Dendritic cell treated with granulocyte-macrophage colony-stimulating factor and Interleukin-4, amounts not matched to agents 40 ng/mL and 50 ng/mL, for 4 days (primary cell): ENCODE measurements at regions of chr11 and their contacts with region 1.

Region 1: GRCh38 chr11:117180661-117181585 is 2.4 kb downstream of the SIDT2 start:
- H3K4me3 Mint-ChIP-seq: peak overlapping the region; percentile 96
- H3K27ac Mint-ChIP-seq: peak overlapping the region; percentile 94
- H3K4me1 Mint-ChIP-seq: peaks cover 50% of the 10 kb centered on the region
- H3K27me3 Mint-ChIP-seq: no peaks in the 10 kb centered on the region

Region 2: GRCh38 chr11:117098269-117099232 is 82.4 kb before region 1 on chr11 and contains the start of gene SIK3:
- intact Hi-C with region 1: no loop called
- H3K4me3 Mint-ChIP-seq: peak within 1 kb of the TSS; percentile 91
- H3K27ac Mint-ChIP-seq: peak within 1 kb of the TSS; percentile 100
- H3K4me1 Mint-ChIP-seq: peaks cover 41% of the 10 kb centered on the region
- H3K27me3 Mint-ChIP-seq: no peaks in the 10 kb centered on the region

Region 3: GRCh38 chr11:117144477-117145392 is 36.2 kb before region 1 on chr11:
- intact Hi-C with region 1: loop called (anchors 5 kb)
- H3K4me3 Mint-ChIP-seq: peak overlapping the region; percentile 99
- H3K27ac Mint-ChIP-seq: peak overlapping the region; percentile 100
- H3K4me1 Mint-ChIP-seq: peaks cover 58% of the 10 kb centered on the region
- H3K27me3 Mint-ChIP-seq: peaks cover 4% of the 10 kb centered on the region

Region 4: GRCh38 chr11:117226388-117227385 is 45.8 kb after region 1 on chr11:
- intact Hi-C with region 1: loop called (anchors 1 kb)
- H3K4me3 Mint-ChIP-seq: no peak overlapping the region
- H3K27ac Mint-ChIP-seq: peak overlapping the region; percentile 34
- H3K4me1 Mint-ChIP-seq: peaks cover 32% of the 10 kb centered on the region
- H3K27me3 Mint-ChIP-seq: no peaks in the 10 kb centered on the region